Activated naive CD4-positive, alpha-beta T cell treated with anti-CD3 and anti-CD28 coated beads for 36 hours (primary cell): ENCODE measurements at regions of chr4 and their contacts with region 1.

Region 1: DNA sequence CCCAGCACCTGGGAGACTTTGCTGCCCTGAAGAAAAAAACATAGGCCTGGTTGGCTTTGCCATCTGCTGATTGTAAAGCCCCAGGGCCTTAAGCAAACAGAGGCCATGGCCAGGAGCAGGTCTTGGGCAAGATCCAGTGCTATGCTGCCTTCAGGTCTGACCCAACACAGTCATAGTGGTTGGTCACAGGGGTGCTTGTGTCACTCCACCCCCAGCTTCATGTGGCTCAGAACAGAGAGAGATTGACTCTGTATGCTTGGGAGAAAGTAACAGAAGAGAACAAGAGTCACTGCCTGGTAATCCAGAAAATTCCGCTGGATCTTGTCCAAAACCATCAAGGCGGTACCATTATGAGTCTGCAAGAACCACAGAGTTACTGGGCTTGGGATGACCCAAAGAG is 24.4 kb upstream of the SMARCA5 start:
- DNase-seq: no peak
- H3K4me3 Mint-ChIP-seq: no peak overlapping the region
- H3K27ac Mint-ChIP-seq: no peak overlapping the region
- H3K4me1 Mint-ChIP-seq: no peaks in the 10 kb centered on the region
- H3K27me3 Mint-ChIP-seq: peaks cover 4% of the 10 kb centered on the region

Region 2: GRCh38 chr4:143399113-143399949 is 89.8 kb before region 1 on chr4:
- CTCF ChIA-PET with region 1: no interaction called
- intact Hi-C with region 1: loop called (anchors 5 kb)
- DNase-seq: no peak
- H3K4me3 Mint-ChIP-seq: no peak overlapping the region
- H3K27ac Mint-ChIP-seq: no peak overlapping the region
- H3K4me1 Mint-ChIP-seq: peaks cover 8% of the 10 kb centered on the region
- H3K27me3 Mint-ChIP-seq: peaks cover 14% of the 10 kb centered on the region

Region 3: DNA sequence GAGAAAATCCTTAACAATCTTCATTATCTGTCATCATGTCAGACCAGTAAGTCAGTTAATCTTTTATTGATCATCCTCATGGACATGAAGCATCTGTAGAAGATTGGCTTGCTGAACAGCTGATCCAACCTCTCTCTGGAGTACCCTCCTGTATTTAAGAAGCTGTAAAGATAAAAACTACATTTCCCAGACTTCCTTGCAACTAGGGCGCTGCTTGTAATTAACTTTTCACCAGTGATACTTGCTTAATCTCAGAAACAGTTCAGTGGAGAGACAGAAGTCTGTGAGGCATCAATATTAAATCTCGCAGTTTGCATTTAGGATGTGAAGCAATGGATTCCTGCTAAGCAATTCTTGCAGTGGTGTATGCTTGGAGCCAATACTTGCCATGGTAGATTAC is 11.6 kb before region 1 on chr4:
- CTCF ChIA-PET with region 1: no interaction called
- intact Hi-C with region 1: no loop called
- DNase-seq: no peak
- H3K4me3 Mint-ChIP-seq: no peak overlapping the region
- H3K27ac Mint-ChIP-seq: no peak overlapping the region
- H3K4me1 Mint-ChIP-seq: no peaks in the 10 kb centered on the region
- H3K27me3 Mint-ChIP-seq: no peaks in the 10 kb centered on the region